ENCODE measurements at regions of chr22 and their contacts with region 1.

Region 1: DNA sequence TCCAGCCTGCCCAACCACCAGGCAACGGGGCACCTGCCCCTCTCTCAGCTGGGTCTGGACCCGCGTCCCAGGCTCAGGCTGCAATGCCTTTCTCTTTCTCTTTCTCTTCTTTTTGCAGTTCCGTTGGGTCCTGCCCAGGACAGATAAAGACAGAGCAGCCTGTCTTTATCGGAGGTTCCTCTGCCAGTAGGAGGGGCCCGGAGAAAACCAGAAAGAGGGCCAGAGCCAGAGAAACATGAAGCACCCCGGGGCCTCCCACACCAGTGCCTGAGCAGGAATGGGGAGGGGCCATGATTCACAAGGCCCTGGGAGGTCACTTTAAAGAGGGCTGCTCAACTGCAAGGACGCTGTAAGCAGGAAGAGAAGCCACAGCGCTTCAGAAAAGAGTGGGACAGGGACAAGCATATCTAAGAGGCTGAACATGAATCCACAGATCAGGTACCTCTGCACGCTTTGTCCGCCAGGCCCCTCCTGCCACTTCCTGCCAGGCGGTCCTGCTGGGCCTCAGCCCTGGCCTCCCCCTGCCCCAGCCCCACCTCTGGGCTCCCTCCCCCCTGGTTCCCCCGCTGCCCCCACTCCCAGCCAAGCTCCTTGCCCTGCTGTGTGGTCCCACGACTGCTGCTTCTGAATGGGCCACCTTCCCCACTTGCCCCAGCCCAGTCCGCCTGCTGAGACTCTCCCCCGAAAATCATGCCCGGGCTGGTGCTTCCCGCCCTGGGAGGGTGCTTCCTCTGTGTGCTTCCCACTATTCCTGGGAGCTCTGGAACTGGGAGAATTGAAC is at the start of gene APOBEC3C:
- DNase-seq: peak; percentile 65
- ATAC-seq: peak; percentile 96
- H3K4me3 Mint-ChIP-seq: peak within 1 kb of the TSS; percentile 96
- H3K27ac Mint-ChIP-seq: peak within 1 kb of the TSS; percentile 95
- H3K4me1 Mint-ChIP-seq: peaks cover 57% of the 10 kb centered on the region
- H3K27me3 Mint-ChIP-seq: no peaks in the 10 kb centered on the region
- CTCF ChIP-seq: no peak
- total RNA-seq, gene APOBEC3C: 173 and 179 TPM in 2 replicates

Region 2: DNA sequence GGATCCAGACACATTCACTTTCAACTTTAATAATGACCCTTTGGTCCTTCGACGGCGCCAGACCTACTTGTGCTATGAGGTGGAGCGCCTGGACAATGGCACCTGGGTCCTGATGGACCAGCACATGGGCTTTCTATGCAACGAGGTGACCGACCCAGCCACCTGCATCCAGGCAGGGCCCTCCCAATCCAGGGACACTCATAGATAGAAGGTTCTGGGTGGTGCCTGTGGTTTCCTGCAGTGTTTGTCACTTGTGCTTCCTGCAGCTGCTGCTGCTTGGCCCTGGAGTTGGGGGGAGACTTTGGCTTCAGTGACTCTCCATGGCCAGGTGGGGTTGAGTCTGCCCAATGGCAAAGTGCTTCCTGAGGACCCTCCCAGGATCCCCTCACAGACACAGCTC is 24.7 kb before region 1 on chr22:
- CTCF ChIA-PET with region 1: no interaction called
- POLR2A ChIA-PET with region 1: no interaction called
- intact Hi-C with region 1: no loop called
- DNase-seq: no peak
- ATAC-seq: no peak
- H3K4me3 Mint-ChIP-seq: no peak overlapping the region
- H3K27ac Mint-ChIP-seq: no peak overlapping the region
- H3K4me1 Mint-ChIP-seq: peaks cover 35% of the 10 kb centered on the region
- H3K27me3 Mint-ChIP-seq: peaks cover 4% of the 10 kb centered on the region
- CTCF ChIP-seq: no peak

Region 3: GRCh38 chr22:39039306-39040126 is 25.4 kb after region 1 on chr22:
- CTCF ChIA-PET with region 1: no interaction called
- POLR2A ChIA-PET with region 1: interaction called, 3 read pairs
- intact Hi-C with region 1: loop called (anchors 2 kb)
- DNase-seq: no peak
- ATAC-seq: no peak
- H3K4me3 Mint-ChIP-seq: peak overlapping the region; percentile 90
- H3K27ac Mint-ChIP-seq: peak overlapping the region; percentile 83
- H3K4me1 Mint-ChIP-seq: peaks cover 43% of the 10 kb centered on the region
- H3K27me3 Mint-ChIP-seq: no peaks in the 10 kb centered on the region
- CTCF ChIP-seq: no peak

Region 4: GRCh38 chr22:39073941-39074340 is 59.8 kb after region 1 on chr22:
- CTCF ChIA-PET with region 1: no interaction called
- POLR2A ChIA-PET with region 1: interaction called, 14 read pairs
- intact Hi-C with region 1: no loop called
- DNase-seq: no peak
- ATAC-seq: no peak
- H3K4me3 Mint-ChIP-seq: no peak overlapping the region
- H3K27ac Mint-ChIP-seq: peak overlapping the region; percentile 94
- H3K4me1 Mint-ChIP-seq: peaks cover 76% of the 10 kb centered on the region
- H3K27me3 Mint-ChIP-seq: no peaks in the 10 kb centered on the region
- CTCF ChIP-seq: no peak

Region 5: GRCh38 chr22:39117585-39118191 is 103.6 kb after region 1 on chr22:
- CTCF ChIA-PET with region 1: interaction called, 6 read pairs
- POLR2A ChIA-PET with region 1: interaction called, 4 read pairs
- intact Hi-C with region 1: loop called (anchors 1 kb)
- DNase-seq: peak; percentile 37
- ATAC-seq: peak; percentile 64
- H3K4me3 Mint-ChIP-seq: peak overlapping the region; percentile 67
- H3K27ac Mint-ChIP-seq: peak overlapping the region; percentile 86
- H3K4me1 Mint-ChIP-seq: peaks cover 52% of the 10 kb centered on the region
- H3K27me3 Mint-ChIP-seq: no peaks in the 10 kb centered on the region
- CTCF ChIP-seq: no peak

Region 6: DNA sequence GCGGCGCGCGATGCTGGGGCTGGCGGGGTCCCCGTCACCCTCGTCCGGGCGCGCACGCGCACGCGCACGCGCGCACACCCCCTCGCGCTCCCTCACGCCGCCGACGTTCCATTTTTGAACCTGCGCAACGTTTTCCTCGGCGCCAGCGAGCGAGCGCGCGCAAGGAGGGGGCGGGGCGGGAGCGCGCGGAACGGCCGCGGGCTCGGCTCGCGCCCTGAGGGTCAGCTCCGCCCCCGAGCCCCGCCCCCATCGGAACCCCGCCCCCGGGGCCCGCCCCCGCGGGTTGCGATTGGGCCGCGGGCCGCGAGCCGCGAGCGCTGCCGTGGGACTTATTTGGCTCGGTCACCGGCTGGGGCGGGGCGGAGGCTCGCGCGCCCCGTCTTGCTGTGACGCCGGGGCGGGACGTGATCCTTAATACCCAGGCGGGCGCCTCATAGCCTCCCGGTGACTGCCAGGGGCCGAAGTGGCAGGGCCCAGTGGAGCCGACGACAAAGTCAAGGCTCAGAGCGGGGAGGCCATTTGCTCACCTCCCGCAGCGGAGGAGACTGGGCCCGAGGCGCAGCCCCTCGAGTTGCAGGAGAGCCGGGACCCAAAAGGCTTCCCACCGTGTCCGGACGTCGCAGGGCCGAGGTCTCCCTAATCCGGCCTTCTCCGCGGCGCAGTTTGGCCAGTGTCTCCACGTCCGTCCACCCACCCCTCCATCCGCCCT is 138.5 kb after region 1 on chr22 and contains the start of gene CBX7:
- CTCF ChIA-PET with region 1: no interaction called
- POLR2A ChIA-PET with region 1: interaction called, 5 read pairs
- intact Hi-C with region 1: loop called (anchors 1 kb)
- DNase-seq: peak; percentile 94
- ATAC-seq: peak; percentile 84
- H3K4me3 Mint-ChIP-seq: peak within 1 kb of the TSS; percentile 84
- H3K27ac Mint-ChIP-seq: peak within 1 kb of the TSS; percentile 76
- H3K4me1 Mint-ChIP-seq: peaks cover 46% of the 10 kb centered on the region
- H3K27me3 Mint-ChIP-seq: peaks cover 16% of the 10 kb centered on the region
- CTCF ChIP-seq: no peak
- total RNA-seq, gene CBX7: 42.6 and 45.4 TPM in 2 replicates